CD8-positive, alpha-beta T cell (primary cell): ENCODE measurements at regions of chr17 and their contacts with region 1.

Region 1: GRCh38 chr17:57783106-57783742 is 38.1 kb upstream of the CCDC182 start:
- DNase-seq: peak; percentile 53 to 85 (median 72)
- ATAC-seq: peak; percentile 91
- H3K4me3 ChIP-seq: peak overlapping the region in 1 of 2 experiments; percentile 25
- H3K4me3 Mint-ChIP-seq: no peak overlapping the region
- H3K27ac ChIP-seq: no peak overlapping the region
- H3K27ac Mint-ChIP-seq: no peak overlapping the region
- H3K4me1 ChIP-seq: peaks cover 8% of the 10 kb centered on the region
- H3K4me1 Mint-ChIP-seq: peaks cover 8% of the 10 kb centered on the region
- H3K27me3 ChIP-seq: peaks cover 3 to 6% of the 10 kb centered on the region in 2 experiments
- H3K27me3 Mint-ChIP-seq: peaks cover 16% of the 10 kb centered on the region
- CTCF ChIP-seq: peak; percentile 88

Region 2: DNA sequence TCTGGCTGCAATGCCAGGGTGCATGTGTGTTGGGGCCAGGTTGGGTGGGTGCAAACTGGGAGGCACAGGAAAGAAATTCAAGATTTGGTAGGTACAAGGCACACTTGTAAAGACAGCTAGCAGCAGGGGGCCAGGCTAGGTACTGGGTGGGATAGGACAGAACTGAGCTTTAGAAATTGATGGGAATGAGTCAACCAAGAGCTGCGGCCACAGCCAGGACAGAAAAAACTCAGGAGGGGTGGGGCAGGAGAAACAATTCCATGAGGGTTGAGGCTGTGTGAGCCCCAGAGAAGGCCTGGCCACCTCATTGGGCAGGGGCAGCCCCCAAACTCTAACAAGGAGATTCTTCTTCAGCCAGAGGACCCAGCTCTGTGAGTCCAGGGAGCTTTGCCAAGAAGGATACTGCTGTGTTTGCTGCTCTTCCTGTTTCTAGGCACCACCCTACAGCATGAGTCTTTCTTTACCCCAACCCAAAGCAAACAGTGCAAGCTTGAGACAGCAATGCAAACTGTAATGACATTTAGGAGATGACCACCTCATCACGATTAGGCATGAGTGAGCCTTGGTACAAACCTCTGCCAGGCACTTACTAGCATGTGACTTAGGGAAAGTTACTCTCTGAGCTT is 16.8 kb before region 1 on chr17:
- CTCF ChIA-PET with region 1: interaction called, 15 read pairs
- POLR2A ChIA-PET with region 1: no interaction called
- intact Hi-C with region 1: no loop called
- DNase-seq: no peak
- ATAC-seq: no peak
- H3K4me3 ChIP-seq: no peak overlapping the region
- H3K4me3 Mint-ChIP-seq: no peak overlapping the region
- H3K27ac ChIP-seq: no peak overlapping the region
- H3K27ac Mint-ChIP-seq: no peak overlapping the region
- H3K4me1 ChIP-seq: no peaks in the 10 kb centered on the region
- H3K4me1 Mint-ChIP-seq: no peaks in the 10 kb centered on the region
- H3K27me3 ChIP-seq: peaks cover 0 to 2% of the 10 kb centered on the region in 2 experiments
- H3K27me3 Mint-ChIP-seq: peaks cover 10% of the 10 kb centered on the region
- CTCF ChIP-seq: no peak

Region 3: DNA sequence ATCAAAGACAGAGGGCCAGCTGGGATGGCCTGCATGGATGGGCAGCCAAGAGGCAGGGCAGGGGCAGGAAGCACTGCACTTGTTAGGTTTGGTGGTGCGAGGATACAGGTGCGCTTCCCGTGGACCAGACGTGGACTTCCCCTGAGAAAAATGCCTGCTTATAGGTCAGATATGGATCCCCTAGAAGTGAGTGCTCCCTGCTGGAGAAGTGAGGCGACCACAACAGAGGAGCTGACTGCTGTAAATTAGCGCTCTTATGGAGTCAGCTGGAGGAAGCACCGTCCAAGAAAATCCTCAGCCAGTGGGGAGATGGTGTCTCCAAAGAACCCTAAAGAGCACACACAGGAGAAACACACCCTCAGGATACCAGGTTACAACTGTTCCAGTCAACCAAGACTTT is 10.4 kb before region 1 on chr17:
- CTCF ChIA-PET with region 1: interaction called, 15 read pairs
- POLR2A ChIA-PET with region 1: no interaction called
- intact Hi-C with region 1: no loop called
- DNase-seq: no peak
- ATAC-seq: no peak
- H3K4me3 ChIP-seq: no peak overlapping the region
- H3K4me3 Mint-ChIP-seq: no peak overlapping the region
- H3K27ac ChIP-seq: no peak overlapping the region
- H3K27ac Mint-ChIP-seq: no peak overlapping the region
- H3K4me1 ChIP-seq: no peaks in the 10 kb centered on the region
- H3K4me1 Mint-ChIP-seq: no peaks in the 10 kb centered on the region
- H3K27me3 ChIP-seq: peaks cover 0 to 3% of the 10 kb centered on the region in 2 experiments
- H3K27me3 Mint-ChIP-seq: peaks cover 25% of the 10 kb centered on the region
- CTCF ChIP-seq: no peak